ENCODE measurements at regions of chr15 and their contacts with region 1.

Region 1: GRCh38 chr15:85504749-85505676 is 124.6 kb downstream of the AKAP13 start:
- DNase-seq: peak in 2 of 10 donors; percentile 19 to 34

Region 2: DNA sequence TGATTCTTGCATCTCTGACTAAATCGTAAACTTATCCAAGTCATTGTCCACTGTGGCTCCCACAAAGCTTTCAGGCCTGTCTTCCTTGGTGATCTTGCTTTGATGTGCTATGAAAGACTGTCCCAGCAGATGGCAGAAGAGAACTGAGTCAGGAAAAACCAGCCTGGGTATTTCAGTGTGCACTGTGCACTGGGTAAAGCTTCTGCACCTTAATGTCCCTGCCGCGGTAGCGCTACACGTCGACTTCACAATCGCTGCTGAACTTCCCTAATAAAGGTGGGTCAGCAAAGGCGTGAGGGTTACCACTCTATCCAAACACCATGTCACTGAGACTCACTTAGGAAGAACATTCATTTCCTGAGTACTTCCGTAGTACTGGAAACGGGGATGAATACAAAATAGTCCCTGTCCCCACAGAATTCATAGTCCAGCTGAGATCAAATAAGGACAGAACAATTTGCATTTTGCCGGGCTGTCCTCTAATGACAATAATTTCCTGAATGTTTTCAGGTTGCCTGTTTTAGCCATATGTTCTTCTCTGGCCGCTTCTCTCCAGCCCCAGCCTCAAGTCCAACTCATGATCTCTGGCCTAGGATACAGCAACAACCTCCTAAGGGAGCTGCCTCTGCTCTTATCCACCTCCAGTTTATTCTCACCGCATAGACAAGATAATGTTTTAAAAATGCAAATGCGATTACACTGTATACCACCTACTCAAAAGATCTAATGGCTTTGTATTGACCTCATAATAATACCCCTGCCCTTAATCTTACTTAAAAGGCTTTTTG is 208.2 kb before region 1 on chr15:
- intact Hi-C with region 1: loop called (anchors 1 kb)
- DNase-seq: peak in 7 of 10 donors; percentile 22 to 84 (median 50)

Region 3: DNA sequence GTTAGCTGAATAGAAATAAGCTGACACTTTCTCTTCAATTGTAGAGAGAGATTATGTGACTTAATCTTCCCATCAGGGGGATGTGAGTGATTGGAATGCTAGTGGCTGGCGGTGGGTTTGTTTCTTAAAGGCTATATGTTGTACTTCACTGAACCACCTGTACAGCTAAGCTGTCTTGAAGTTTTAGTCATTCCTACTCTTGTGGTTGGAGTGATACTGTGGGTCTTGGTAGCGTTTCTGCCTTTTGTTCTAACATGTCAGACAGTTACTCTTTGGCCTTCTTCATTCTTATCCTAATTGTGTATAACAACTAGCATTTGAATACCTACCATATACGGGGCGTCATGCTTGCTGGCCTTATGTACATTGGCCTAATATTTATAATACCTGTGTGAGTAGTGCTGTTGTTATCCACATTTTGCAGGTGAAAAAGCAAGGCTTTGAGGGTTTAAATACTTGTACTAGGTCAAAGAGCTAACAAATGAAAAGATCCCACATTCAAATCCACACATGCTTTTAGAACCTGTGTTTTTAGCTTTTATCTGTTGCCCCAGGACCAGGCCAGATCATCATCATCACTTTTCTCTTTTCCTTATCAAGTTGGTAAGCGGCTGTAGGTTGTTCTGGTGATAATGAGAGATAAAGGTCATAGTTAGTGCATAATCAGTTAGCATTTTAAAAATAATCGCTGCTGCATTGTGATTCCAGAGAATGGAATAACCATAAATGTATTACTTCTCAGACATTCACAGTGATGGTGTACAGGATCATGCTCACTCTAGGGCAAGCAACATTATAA is 74.4 kb before region 1 on chr15:
- intact Hi-C with region 1: no loop called
- DNase-seq: no peak

Region 4: GRCh38 chr15:85485956-85486567 is 19.0 kb before region 1 on chr15:
- intact Hi-C with region 1: loop called (anchors 2 kb)
- DNase-seq: peak in 3 of 10 donors; percentile 11 to 58 (median 11)

Measured in posterior cingulate gyrus (tissue), 11 donors.